Esophagus squamous epithelium (tissue), 5 donors: ENCODE measurements at regions of chr19 and their contacts with region 1.

Region 1: DNA sequence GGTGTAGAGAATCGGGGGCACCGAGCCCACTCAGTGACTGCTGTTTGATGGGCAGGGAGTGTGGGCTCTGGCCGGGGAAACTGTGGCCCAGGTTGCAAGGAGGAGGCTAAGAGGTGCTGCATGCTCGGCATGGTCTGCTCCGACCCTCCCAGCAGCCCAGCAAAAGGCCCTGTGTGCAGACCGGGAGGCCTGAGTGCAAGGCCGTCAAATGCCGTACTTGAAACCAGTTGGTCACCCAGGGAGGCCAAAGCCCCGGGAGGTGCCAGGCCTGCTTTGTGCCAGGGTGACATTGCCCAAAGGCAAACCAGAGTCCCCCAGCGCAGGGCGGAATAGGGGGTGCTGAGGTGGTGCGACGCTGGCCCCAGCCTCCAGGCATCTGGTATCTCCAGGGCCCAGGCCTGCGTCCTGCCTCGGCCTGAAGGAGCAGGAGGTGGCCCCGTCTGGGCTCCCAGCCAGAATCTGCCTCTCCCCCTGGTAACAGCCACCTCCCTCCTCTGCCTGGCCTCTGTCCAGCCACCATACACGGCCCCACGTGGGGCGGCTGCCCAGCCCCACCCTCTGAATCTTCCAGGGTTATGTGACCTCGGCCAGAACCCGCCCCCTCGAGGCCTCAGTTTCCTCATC is 4.0 kb downstream of the PIK3R2 start:
- DNase-seq: no peak
- H3K4me3 ChIP-seq: peak overlapping the region in 2 of 4 donors; percentile 9 to 10
- H3K27ac ChIP-seq: peak overlapping the region; percentile 77 to 97 (median 84)
- H3K4me1 ChIP-seq: peaks cover 54 to 95% (median 67%) of the 10 kb centered on the region in 3 donors
- H3K27me3 ChIP-seq: no peaks in the 10 kb centered on the region
- CTCF ChIP-seq: no peak
- POLR2A ChIP-seq: no peak

Region 2: GRCh38 chr19:18074190-18074589 is 82.8 kb before region 1 on chr19:
- intact Hi-C with region 1: no loop called
- DNase-seq: no peak
- H3K4me3 ChIP-seq: no peak overlapping the region
- H3K27ac ChIP-seq: no peak overlapping the region
- H3K4me1 ChIP-seq: no peaks in the 10 kb centered on the region
- H3K27me3 ChIP-seq: no peaks in the 10 kb centered on the region
- CTCF ChIP-seq: peak in 1 of 6 experiments; percentile 11
- POLR2A ChIP-seq: no peak

Region 3: GRCh38 chr19:18091217-18091608 is 65.7 kb before region 1 on chr19:
- intact Hi-C with region 1: no loop called
- DNase-seq: no peak
- H3K4me3 ChIP-seq: no peak overlapping the region
- H3K27ac ChIP-seq: peak overlapping the region; percentile 50 to 73 (median 62)
- H3K4me1 ChIP-seq: peaks cover 0 to 30% (median 13%) of the 10 kb centered on the region in 3 donors
- H3K27me3 ChIP-seq: no peaks in the 10 kb centered on the region
- CTCF ChIP-seq: no peak
- POLR2A ChIP-seq: peak in 1 of 4 donors; percentile 63

Region 4: DNA sequence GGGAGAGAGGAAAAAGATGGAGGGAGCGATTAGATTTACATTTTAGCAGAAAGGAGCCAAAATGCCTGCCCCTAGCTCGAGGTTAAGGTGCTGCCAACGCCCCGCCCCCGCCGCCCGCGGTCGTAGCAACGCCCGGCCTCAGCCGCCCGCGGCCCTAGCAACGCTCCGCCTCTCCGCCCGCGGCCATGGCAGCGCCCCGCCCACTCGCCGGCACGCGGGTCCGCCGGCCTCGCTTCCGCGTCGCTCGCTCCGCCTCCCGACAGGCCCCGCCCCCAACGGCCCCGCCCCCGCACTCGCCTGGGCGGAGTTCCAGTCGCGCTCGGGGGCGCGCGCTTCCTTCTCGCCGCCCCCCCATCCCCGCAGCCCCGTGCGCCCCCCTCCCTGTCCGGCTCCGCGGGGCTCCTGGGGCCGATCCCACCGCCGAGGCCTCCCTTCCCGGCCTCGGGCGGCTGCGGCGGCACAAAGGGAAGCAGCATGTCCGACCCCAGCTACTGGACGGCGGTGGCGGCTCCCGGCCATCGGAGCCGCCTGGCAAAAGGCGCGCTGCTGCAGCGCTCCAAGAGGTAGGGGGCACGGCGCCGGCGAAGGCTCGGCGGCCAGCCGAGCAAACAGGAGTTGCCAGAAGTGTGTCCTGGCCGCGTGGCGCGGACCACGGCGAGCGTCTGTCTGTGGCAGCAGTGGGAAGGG is 39.1 kb before region 1 on chr19:
- intact Hi-C with region 1: loop called (anchors 5 kb)
- DNase-seq: no peak
- H3K4me3 ChIP-seq: peak overlapping the region; percentile 54 to 81 (median 71)
- H3K27ac ChIP-seq: peak overlapping the region; percentile 65 to 87 (median 75)
- H3K4me1 ChIP-seq: peaks cover 19 to 39% (median 22%) of the 10 kb centered on the region in 3 donors
- H3K27me3 ChIP-seq: no peaks in the 10 kb centered on the region
- CTCF ChIP-seq: no peak
- POLR2A ChIP-seq: peak in 1 of 4 donors; percentile 6

Region 5: GRCh38 chr19:18291590-18292461 is 134.9 kb after region 1 on chr19:
- intact Hi-C with region 1: no loop called
- DNase-seq: peak; percentile 52
- H3K4me3 ChIP-seq: peak overlapping the region; percentile 45 to 87 (median 66)
- H3K27ac ChIP-seq: peak overlapping the region; percentile 87 to 100 (median 97)
- H3K4me1 ChIP-seq: peaks cover 26 to 66% (median 26%) of the 10 kb centered on the region in 3 donors
- H3K27me3 ChIP-seq: no peaks in the 10 kb centered on the region
- CTCF ChIP-seq: no peak
- POLR2A ChIP-seq: peak in 2 of 4 donors; percentile 60 to 86